Activated T-helper 2 cell treated with anti-CD3 and anti-CD28 coated beads, Interferon-gamma antibody, Interleukin-2, Interleukin-4, amounts not matched to agents 10 μg/mL and 5 μg/mL and 100 μg/mL, durations not matched to agents 14 hours and 24 hours and 36 hours (primary cell): ENCODE measurements at regions of chr3 and their contacts with region 1.

Region 1: DNA sequence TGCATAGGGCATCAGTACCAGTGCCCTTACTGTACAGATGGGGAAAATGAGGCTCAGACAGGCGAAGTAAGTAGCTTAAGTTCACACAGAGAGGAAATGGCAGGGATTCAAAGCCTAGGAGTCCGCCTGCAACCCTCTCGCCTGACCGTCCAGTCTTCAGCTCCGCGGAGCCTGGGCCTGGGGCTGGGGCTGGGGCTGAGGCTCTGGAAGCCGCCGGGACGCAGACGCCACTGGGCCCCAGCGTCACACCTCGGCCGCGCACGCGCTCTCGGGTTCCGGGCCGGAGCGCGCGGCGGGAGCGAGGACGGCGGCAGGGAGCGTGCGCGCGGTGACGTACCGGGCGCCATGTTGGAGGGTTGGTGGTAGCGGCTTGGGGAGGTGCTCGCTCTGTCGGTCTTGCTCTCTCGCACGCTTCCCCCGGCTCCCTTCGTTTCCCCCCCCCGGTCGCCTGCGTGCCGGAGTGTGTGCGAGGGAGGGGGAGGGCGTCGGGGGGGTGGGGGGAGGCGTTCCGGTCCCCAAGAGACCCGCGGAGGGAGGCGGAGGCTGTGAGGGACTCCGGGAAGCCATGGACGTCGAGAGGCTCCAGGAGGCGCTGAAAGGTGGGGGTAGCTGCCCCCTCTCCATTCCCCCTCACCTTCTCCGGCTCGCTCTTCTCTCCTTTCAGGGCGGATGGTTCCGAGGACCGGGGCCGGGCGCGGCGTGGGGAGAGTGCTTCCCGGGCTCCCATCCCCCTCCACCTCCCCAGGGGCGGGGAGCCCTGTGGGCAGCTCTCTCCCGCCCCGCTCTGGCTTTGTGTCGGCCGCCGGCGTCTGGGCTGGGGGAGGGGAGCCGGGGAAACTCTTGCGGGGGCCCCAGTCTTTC is at the start of gene PPP4R2:
- DNase-seq: peak; percentile 90
- H3K4me3 Mint-ChIP-seq: peak within 1 kb of the TSS; percentile 90
- H3K27ac Mint-ChIP-seq: peak within 1 kb of the TSS; percentile 89
- H3K4me1 Mint-ChIP-seq: peaks cover 35% of the 10 kb centered on the region
- H3K27me3 Mint-ChIP-seq: no peaks in the 10 kb centered on the region
- total RNA-seq, gene PPP4R2: 105 and 111 TPM in 2 replicates

Region 2: GRCh38 chr3:72938471-72939265 is 58.0 kb before region 1 on chr3:
- intact Hi-C with region 1: loop called (anchors 1 kb)
- DNase-seq: no peak
- H3K4me3 Mint-ChIP-seq: no peak overlapping the region
- H3K27ac Mint-ChIP-seq: no peak overlapping the region
- H3K4me1 Mint-ChIP-seq: no peaks in the 10 kb centered on the region
- H3K27me3 Mint-ChIP-seq: peaks cover 23% of the 10 kb centered on the region

Region 3: DNA sequence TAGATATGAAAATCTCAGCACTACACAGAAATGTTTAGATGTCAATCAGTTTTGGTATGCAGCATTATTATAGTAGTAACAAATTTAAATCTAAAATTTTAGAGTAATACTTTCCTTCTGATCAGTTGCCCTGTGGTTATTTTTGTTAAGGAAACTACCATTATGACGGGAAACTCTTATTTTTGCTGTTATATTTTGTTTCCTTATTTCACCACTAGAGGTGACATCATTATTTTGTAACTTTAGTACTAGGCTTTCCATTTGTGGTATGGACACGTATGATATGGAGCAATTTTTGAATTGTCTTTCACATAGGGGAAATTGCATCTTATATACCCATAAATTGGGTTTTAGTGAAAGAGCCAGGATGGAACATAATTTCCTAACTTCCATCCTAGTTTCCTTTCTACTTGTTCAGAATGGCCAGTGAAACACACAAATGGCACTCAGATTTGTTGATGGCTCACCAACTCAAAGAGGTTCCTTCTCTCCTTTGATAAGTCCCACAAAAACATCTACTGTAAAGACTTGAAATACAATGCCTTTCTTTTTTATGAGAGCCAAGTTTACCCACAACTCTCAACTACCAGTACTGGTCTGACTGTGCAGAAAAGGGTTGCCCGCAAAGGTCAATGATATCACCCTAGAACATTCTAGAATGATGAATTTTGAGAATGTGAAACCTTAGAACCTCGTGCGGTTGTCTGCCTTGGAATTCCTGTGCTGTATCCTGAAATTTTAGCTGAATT is 19.5 kb before region 1 on chr3:
- intact Hi-C with region 1: loop called (anchors 1 kb)
- DNase-seq: no peak
- H3K4me3 Mint-ChIP-seq: no peak overlapping the region
- H3K27ac Mint-ChIP-seq: peak overlapping the region; percentile 87
- H3K4me1 Mint-ChIP-seq: peaks cover 22% of the 10 kb centered on the region
- H3K27me3 Mint-ChIP-seq: peaks cover 2% of the 10 kb centered on the region

Region 4: GRCh38 chr3:73037369-73037699 is 40.6 kb after region 1 on chr3:
- intact Hi-C with region 1: loop called (anchors 2 kb)
- DNase-seq: no peak
- H3K4me3 Mint-ChIP-seq: no peak overlapping the region
- H3K27ac Mint-ChIP-seq: peak overlapping the region; percentile 70
- H3K4me1 Mint-ChIP-seq: peaks cover 71% of the 10 kb centered on the region
- H3K27me3 Mint-ChIP-seq: no peaks in the 10 kb centered on the region